AG04449 (cell line): ENCODE measurements at regions of chr19 and their contacts with region 1.

Region 1: DNA sequence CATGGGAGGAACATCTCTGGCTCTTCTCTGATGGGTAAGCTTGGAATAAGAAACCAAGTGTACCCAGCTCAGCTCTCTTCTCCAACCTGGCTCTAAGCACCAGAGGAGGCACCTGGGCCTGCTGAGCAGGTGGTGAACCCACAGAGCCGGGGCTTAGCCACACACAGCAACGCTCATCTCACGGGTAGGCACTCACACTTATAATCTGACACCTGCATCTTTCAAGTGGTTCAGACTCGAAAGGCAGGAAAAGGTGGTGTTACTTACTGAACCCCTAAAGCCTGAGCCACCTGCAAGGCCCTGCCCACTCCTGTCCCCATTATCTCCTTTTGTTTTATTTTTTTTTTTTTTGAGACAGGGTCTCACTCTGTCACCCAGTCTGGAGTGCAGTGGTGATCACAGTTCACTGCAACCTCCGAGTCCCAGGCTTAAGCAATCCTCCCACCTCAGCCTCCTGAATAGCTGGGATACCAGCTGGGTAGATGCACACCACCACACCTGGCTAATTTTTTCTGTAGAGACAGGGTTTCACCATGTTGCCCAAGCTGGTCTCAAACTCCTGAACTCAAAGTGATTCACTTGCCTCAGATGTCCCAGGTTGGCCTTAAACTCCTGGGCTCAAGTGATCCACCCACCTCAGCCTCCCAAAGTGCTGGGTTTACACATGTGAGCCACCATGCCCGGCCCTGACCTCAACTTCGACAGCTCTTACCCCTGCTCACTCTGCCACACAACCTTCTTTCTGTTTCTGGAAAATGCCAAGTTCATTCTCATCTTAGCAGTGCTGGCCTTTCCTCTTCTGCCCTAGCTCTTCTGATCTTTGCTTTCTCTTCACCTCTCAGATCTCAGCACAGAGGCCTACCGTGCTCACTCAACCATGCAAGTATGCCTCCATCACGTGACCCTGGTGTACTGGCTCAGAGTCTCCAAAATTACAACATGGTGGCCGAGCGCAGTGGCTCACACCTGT is 9.7 kb downstream of the FBXL12 start:
- DNase-seq: no peak
- H3K4me3 ChIP-seq: no peak overlapping the region
- CTCF ChIP-seq: no peak

Region 2: DNA sequence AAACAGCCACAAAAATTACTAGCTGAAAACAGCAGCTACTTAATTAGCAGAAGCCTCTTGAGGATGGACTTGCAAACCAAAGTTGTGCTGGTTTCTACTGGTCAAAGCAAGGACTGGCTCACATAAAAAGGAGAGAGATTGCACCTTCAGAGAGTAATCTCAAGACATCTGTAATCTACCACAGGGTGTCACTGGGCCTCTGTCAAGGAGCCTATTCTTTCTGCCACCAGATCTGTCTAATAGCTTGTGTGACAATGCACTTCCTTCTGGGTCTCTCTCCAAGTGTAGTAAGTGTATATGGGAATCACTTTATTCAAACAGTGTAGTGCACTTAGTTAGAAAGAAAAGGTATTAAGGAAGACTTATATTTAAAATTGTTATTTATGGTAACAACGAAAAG is 163.7 kb before region 1 on chr19:
- CTCF ChIA-PET with region 1: no interaction called
- POLR2A ChIA-PET with region 1: no interaction called
- DNase-seq: no peak
- H3K4me3 ChIP-seq: no peak overlapping the region
- CTCF ChIP-seq: no peak

Region 3: DNA sequence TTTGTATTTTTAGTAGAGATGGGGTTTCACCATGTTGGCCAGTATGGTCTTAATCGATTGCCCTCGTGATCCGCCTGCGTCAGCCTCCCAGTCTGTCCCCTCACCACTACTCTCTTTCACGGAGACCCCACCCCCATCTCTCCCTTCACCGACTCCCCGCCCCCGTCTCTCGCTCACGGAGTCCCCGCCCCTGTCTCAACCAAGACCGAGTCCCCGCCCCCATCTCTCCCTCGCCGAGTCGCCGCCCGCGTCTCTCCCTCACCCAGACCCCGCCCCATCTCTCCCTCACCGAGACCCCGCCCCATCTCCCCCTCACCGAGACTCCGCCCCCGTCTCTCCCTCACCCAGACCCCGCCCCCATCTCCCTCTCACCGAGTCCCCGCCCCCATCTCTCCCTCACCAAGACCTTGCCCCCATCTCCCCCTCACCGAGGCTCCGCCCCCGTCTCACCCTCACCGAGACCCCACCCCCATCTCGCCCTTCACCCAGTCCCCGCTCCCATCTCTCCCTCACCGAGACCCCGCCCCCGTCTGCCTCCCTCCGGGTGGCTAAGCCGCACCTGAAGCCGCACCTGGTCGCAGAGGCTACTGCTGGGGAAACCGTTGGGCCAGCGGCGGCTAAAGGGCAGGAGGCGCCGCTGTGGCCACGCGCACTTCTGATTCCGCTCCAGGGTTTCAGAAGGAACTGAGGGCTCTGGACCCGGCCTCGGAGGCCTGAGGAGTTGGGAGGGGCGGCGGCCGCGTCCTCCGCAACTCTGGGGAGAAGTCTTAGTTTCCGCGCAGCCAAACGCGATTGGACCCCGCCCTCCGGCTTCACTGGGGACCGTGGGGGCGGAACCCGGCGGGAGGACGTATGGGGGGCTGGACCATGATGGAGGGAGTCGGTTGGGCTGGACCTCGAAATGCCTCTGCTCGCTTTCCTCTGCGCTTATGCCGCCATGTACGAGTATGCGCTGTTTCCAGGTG is 23.5 kb before region 1 on chr19:
- CTCF ChIA-PET with region 1: no interaction called
- POLR2A ChIA-PET with region 1: no interaction called
- DNase-seq: no peak
- H3K4me3 ChIP-seq: peak overlapping the region; percentile 94
- CTCF ChIP-seq: no peak

Region 4: DNA sequence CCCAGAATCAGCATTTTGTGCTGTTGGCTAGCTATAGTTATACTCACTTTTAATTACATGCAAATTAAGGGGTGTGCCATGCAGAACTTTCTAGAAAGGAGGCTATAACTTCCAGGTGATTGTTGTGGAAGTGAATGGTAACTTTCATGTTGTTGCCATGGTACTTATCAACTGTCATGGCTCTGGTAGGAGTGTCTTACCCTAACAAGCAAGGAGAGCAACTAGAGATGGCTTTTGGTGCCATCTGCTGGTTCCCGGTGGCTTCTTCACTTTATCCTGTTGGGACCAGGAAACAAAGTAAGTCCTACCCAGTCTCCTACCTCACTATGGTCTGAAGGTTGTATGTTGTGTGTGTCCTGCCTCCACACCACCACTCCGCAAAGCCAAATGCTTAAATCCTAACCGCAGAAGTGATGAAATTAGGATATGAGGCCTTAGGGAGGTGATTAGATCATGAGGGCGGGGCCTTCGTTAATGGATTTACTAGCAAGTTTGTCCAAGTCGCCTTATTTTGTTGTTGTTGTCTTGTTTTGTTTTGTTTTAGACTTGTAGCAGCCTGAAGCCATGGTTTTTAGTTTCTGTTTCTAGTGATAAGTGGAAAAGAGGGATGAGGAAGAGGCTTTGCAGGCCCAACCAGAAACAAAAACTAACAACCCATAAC is 12.9 kb before region 1 on chr19:
- CTCF ChIA-PET with region 1: interaction called, 15 read pairs
- POLR2A ChIA-PET with region 1: no interaction called
- DNase-seq: peak; percentile 64
- H3K4me3 ChIP-seq: no peak overlapping the region
- CTCF ChIP-seq: peak; percentile 74